ENCODE measurements at regions of chr6 and their contacts with region 1.

Region 1: GRCh38 chr6:89940225-89941027 is 46.2 kb downstream of the GJA10 start:
- DNase-seq: peak; percentile 83
- H3K4me3 Mint-ChIP-seq: no peak overlapping the region
- H3K27ac Mint-ChIP-seq: peak overlapping the region; percentile 72
- H3K4me1 Mint-ChIP-seq: peaks cover 45% of the 10 kb centered on the region
- H3K27me3 Mint-ChIP-seq: no peaks in the 10 kb centered on the region

Region 2: DNA sequence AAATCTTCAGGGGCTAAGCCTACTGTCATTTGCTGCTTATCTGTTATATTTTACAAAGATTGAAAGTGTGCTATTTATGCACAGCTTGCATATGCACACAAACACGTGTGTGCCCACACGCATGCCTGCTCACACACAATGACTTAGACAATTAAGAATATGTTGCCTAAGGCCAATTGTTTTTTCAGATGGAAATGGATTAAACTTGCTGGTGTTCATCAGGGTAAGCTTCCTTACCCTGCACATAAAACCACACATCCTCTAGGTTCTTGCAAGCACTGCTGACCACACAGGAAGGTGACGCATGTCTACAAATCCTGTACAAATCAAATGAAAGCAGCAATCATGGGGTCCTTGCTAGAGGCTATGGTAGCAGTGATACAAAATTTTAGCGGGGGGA is 12.3 kb after region 1 on chr6:
- CTCF ChIA-PET with region 1: interaction called, 23 read pairs
- POLR2A ChIA-PET with region 1: no interaction called
- DNase-seq: peak; percentile 77
- H3K4me3 Mint-ChIP-seq: peak overlapping the region; percentile 41
- H3K27ac Mint-ChIP-seq: peak overlapping the region; percentile 88
- H3K4me1 Mint-ChIP-seq: peaks cover 70% of the 10 kb centered on the region
- H3K27me3 Mint-ChIP-seq: no peaks in the 10 kb centered on the region

Region 3: DNA sequence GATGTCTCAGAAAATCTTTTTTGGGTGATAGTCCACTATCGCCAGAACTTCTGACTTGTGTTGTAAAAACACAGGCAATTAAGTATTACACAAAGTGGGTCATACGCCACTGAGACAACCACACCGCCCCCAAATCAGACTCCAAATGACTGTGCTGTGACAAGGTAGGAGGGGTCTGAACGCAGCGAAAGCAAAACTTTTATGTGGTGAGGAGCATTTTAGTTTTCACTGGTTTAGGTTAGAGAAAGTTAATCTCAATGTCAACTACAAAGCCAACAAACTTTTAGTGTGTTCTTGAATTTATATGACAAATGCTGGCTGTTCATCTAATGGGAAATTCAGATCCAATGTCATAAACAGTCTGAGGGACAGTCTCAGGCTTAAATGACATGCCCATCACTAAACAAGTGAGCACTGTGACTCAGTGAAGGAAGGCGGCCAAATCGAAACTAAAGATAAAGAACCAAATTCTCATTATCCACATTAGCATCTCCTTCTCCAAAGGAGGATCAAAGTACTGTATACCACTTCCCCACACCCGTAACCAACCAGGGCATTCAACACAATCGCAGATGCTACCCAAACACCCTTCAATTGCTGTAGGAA is 140.6 kb after region 1 on chr6:
- CTCF ChIA-PET with region 1: no interaction called
- POLR2A ChIA-PET with region 1: no interaction called
- DNase-seq: peak; percentile 87
- H3K4me3 Mint-ChIP-seq: peak overlapping the region; percentile 86
- H3K27ac Mint-ChIP-seq: peak overlapping the region; percentile 96
- H3K4me1 Mint-ChIP-seq: peaks cover 84% of the 10 kb centered on the region
- H3K27me3 Mint-ChIP-seq: no peaks in the 10 kb centered on the region

Measured in activated CD4-positive, alpha-beta T cell treated with anti-CD3 and anti-CD28 coated beads, Interleukin-2, amount 10 ng/mL, durations not matched to agents 7 days and 5 days (primary cell).